Calu3 (cell line): ENCODE measurements at regions of chr2 and their contacts with region 1.

Region 1: GRCh38 chr2:53460347-53460746 is 307.3 kb upstream of the CHAC2 start:
- DNase-seq: peak; percentile 70
- H3K4me3 Mint-ChIP-seq: no peak overlapping the region
- H3K27ac Mint-ChIP-seq: no peak overlapping the region
- H3K4me1 Mint-ChIP-seq: no peaks in the 10 kb centered on the region
- H3K27me3 Mint-ChIP-seq: no peaks in the 10 kb centered on the region
- CTCF ChIP-seq: no peak

Region 2: GRCh38 chr2:53740170-53740569 is 279.8 kb after region 1 on chr2:
- CTCF ChIA-PET with region 1: no interaction called
- intact Hi-C with region 1: loop called (anchors 1 kb)
- DNase-seq: no peak
- H3K4me3 Mint-ChIP-seq: no peak overlapping the region
- H3K27ac Mint-ChIP-seq: no peak overlapping the region
- H3K4me1 Mint-ChIP-seq: no peaks in the 10 kb centered on the region
- H3K27me3 Mint-ChIP-seq: no peaks in the 10 kb centered on the region
- CTCF ChIP-seq: no peak